Activated B cell treated with CpG ODN at 0.5 μM for 24 hours (primary cell): ENCODE measurements at regions of chr12 and their contacts with region 1.

Region 1: DNA sequence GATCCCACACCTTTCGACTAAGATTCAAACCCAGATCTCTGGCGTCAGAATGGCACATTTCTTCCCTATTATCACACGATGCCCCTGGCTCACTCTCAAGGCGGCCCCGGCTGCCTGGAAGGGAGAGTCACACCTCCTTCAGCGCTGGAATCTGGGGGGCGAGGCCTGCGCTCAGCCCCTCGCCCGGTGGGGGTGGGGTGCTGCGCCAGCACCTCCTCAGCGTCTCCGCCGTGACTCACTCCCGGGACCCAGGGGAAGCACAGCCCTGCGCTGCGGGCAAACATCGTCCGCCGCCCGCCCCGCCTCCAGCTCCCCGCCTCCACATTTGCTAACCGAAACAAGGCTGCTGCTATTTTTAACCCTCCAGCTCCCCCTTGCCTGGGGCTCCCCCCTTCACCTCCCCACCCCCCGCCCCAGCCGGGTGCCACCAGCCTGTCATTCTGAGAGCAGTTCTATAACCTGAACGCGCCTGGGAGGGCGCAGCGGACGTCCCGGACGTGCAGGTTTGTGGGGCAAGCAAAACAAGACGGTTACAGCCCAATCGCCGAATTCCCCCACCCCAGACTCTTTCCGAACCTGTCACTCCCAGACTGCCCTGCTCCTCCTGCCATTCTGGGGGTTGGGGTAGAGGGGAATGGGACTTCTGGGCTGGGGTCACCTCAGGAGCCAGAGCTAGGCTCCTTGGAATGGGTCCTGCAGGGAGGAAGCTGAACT is 6.7 kb downstream of the HDAC7 start:
- DNase-seq: peak; percentile 83
- ATAC-seq: peak; percentile 74
- H3K4me3 Mint-ChIP-seq: peak overlapping the region; percentile 84
- H3K27ac Mint-ChIP-seq: peak overlapping the region; percentile 99
- H3K4me1 Mint-ChIP-seq: peaks cover 97% of the 10 kb centered on the region
- H3K27me3 Mint-ChIP-seq: no peaks in the 10 kb centered on the region
- CTCF ChIP-seq: no peak

Region 2: DNA sequence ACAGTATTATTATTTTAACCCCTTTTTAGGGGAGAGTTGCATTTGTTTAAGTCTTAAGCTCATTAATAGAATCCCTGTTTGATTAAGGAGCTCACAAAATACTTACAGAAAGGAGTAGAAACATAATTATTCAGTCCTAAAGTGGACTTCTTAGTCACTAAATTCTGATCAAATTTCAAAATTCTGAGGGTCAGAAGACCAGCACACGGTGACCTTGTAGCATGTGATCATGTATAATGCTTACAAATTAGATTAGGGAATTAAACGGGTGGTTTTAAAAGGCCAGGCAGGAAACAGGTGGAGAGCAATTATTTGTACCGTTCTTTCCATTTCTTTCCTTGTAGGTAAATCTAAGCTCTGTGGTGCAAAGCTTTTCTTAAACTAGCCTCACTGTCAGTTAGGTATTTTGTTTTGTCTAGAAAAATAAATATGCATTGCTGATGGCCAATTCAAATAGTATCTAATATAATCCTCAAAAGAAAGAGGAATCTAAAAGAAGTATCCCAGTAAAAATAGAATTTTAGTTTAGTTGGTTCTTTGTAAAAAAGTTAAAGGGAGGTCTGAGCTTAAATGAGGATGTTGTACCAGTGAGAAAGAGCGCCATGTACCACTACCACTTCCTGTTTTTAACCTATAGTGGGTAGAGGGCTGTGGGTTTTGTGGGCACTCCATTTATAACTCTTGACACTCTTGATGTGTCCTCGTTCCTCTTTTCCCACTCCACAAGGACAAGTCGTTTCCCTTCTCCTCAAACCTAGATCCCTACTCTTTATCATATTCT is 1595.2 kb before region 1 on chr12:
- CTCF ChIA-PET with region 1: no interaction called
- POLR2A ChIA-PET with region 1: no interaction called
- intact Hi-C with region 1: loop called (anchors 5 kb)
- DNase-seq: no peak
- ATAC-seq: peak; percentile 63
- H3K4me3 Mint-ChIP-seq: peak overlapping the region; percentile 49
- H3K27ac Mint-ChIP-seq: peak overlapping the region; percentile 98
- H3K4me1 Mint-ChIP-seq: peaks cover 97% of the 10 kb centered on the region
- H3K27me3 Mint-ChIP-seq: no peaks in the 10 kb centered on the region
- CTCF ChIP-seq: no peak

Region 3: GRCh38 chr12:47356129-47356700 is 456.7 kb before region 1 on chr12:
- CTCF ChIA-PET with region 1: no interaction called
- POLR2A ChIA-PET with region 1: no interaction called
- intact Hi-C with region 1: loop called (anchors 5 kb)
- DNase-seq: no peak
- ATAC-seq: peak; percentile 77
- H3K4me3 Mint-ChIP-seq: peak overlapping the region; percentile 51
- H3K27ac Mint-ChIP-seq: peak overlapping the region; percentile 97
- H3K4me1 Mint-ChIP-seq: peaks cover 85% of the 10 kb centered on the region
- H3K27me3 Mint-ChIP-seq: no peaks in the 10 kb centered on the region
- CTCF ChIP-seq: no peak

Region 4: DNA sequence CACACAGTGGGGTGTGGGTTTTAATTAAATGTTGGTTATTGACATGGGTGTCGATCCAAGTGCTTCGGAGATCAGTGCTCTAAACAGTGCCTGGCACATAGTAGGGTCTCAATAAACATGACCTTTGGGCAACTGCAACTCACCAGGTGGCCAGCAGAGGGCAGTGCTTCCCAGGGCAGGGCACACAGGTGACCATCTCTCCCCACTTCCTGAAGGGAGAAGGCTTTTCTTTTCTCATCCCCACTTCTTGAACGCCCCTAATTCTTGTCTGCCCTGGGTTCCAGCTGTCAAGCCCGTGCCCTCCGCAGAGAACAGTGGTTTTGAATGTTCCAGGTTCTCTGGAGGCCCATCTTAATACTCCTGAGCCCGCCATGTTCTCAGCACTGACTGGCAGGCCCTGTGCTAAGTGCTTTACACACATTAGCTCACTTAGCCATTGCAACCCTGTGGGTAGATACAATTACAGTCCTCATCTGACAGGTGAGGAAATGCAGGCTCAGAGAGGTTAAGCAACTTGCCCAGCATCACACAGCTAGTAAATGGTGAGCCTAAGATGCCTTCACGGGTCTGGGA is 70.6 kb before region 1 on chr12:
- CTCF ChIA-PET with region 1: interaction called, 11 read pairs
- POLR2A ChIA-PET with region 1: interaction called, 9 read pairs
- intact Hi-C with region 1: no loop called
- DNase-seq: peak; percentile 71
- ATAC-seq: peak; percentile 20
- H3K4me3 Mint-ChIP-seq: no peak overlapping the region
- H3K27ac Mint-ChIP-seq: peak overlapping the region; percentile 1
- H3K4me1 Mint-ChIP-seq: peaks cover 73% of the 10 kb centered on the region
- H3K27me3 Mint-ChIP-seq: no peaks in the 10 kb centered on the region
- CTCF ChIP-seq: no peak

Region 5: DNA sequence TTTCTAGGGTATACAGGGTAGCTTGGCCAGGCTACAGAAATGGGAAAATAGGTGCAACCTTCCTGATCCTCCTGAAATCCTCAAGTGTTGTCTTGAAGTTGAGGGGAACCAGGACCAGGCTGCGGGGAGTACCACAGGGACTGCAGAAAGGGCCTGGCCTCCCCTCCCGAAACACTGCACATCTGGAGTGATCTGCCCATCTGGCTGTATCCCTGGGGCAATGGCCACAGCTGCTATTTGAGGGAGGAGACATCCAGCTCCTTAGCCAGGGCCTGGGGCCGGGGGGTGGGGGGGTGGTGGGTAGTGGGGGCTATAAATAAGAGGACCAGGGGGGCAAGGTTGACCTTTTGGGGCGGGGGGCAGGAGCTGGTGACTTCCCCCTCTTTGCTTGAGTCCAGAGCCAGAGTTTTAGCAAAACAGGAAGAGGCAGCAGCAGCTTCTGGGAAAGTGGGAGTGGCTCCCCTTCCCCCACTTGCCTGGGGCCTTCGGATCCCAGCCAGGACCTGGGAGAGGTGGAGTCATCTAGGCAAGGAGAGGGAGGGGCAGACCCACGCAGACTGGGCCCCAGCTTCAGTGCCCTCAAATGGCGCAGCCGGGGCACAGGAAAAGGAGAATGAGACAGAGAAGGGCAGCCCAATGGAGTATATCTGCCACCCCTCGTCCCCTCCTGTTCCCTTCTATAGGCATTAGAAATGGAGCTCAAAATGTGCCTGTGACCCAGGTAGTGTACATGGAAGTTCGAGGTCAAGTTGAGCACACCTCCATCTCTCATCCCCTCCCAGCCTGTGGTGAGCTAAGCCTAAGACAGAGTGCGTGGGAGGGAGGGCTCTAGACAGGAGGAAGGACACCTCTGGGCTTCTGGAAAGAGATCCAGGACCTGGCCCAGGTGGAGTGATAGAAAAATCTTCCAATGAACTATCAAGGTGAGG is 15.9 kb after region 1 on chr12:
- CTCF ChIA-PET with region 1: interaction called, 38 read pairs
- POLR2A ChIA-PET with region 1: interaction called, 573 read pairs
- intact Hi-C with region 1: loop called (anchors 1 kb)
- DNase-seq: no peak
- ATAC-seq: no peak
- H3K4me3 Mint-ChIP-seq: no peak overlapping the region
- H3K27ac Mint-ChIP-seq: no peak overlapping the region
- H3K4me1 Mint-ChIP-seq: peaks cover 54% of the 10 kb centered on the region
- H3K27me3 Mint-ChIP-seq: no peaks in the 10 kb centered on the region
- CTCF ChIP-seq: no peak

Region 6: DNA sequence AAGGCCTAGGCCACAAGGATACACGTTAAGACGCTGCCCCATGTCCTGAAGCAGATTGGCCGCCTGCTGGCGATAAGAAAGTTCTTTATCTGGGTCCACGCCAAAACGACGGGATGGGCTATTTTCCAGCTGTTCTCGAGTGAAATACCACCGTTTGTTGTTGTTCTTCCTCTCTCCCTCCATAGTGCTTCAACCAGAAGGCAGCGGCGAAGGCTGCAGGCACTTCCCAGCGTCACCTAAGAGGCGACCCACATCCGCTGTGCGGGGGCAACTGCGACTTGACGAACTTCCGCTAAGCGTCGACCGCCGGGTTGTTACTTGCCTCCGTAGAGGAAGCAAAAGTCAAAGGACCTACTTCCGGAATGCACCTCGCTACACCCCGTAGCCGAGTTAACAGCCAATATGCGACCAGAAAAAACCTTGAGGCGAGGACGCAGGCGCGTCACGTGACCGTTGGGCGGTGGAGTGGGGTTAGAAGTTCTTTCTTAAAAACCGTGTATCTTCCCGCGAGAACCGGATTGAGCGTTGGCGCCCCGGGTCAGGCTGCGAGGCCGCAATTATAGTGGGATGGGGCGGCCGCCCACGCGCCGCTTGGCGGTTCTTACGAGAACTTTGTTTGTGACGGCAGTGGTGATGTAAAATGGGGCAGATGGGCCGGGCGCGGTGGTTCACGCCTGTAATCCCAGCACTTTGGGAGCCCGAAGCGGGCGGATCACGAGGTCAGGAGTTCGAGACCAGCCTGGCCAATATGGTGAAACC is 903.7 kb after region 1 on chr12 and contains the start of gene CCNT1:
- CTCF ChIA-PET with region 1: no interaction called
- POLR2A ChIA-PET with region 1: no interaction called
- intact Hi-C with region 1: loop called (anchors 2 kb)
- DNase-seq: peak; percentile 92
- ATAC-seq: peak; percentile 91
- H3K4me3 Mint-ChIP-seq: peak within 1 kb of the TSS; percentile 87
- H3K27ac Mint-ChIP-seq: peak within 1 kb of the TSS; percentile 97
- H3K4me1 Mint-ChIP-seq: peaks cover 39% of the 10 kb centered on the region
- H3K27me3 Mint-ChIP-seq: peaks cover 2% of the 10 kb centered on the region
- CTCF ChIP-seq: no peak
- total RNA-seq, gene CCNT1: 48.9 and 49.6 TPM in 2 replicates